Activated T-helper 1 cell treated with anti-CD3 and anti-CD28 coated beads, Interleukin-12 subunit alpha, Interleukin-12 subunit beta, Interleukin-2, Interleukin-4 antibody, amounts not matched to agents 30 ng/mL and 10 ng/mL and 1 ng/mL, durations not matched to agents 14 hours and 24 hours and 36 hours (primary cell): ENCODE measurements at regions of chr14 and their contacts with region 1.

Region 1: DNA sequence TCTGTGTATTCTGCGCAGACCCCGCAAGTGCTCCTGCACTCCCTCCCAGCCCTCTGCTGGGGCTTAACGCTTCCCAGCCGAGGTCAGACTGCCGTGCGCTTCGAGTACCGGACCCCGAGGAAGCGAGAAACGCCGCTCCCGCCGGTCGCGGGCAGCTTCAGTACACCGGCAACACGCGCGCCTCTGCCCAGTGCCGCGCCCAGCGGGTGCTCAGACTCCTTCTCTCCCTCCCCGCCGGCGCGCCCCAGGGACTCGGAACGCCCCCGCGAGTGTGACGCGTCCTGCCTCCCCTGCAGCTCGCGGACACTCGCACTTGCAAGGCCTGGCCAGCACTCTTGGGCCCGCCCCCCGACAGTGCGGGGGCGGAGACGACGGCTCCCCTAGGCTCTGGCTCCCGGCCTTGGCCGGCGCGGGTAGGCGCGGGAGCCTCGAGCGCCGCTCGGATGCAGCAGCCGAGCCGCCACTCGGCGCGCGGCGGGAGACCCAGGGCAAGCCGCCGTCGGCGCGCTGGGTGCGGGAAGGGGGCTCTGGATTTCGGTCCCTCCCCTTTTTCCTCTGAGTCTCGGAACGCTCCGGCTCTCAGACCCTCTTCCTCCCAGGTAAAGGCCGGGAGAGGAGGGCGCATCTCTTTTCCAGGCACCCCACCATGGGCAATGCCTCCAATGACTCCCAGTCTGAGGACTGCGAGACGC is at the start of gene PTGER2:
- DNase-seq: peak; percentile 85
- H3K4me3 Mint-ChIP-seq: peak within 1 kb of the TSS; percentile 98
- H3K27ac Mint-ChIP-seq: peak within 1 kb of the TSS; percentile 99
- H3K4me1 Mint-ChIP-seq: peaks cover 71% of the 10 kb centered on the region
- H3K27me3 Mint-ChIP-seq: peaks cover 1% of the 10 kb centered on the region
- total RNA-seq, gene PTGER2: 67.4 and 67.9 TPM in 2 replicates

Region 2: GRCh38 chr14:52299692-52300278 is 14.3 kb before region 1 on chr14:
- intact Hi-C with region 1: loop called (anchors 1 kb)
- DNase-seq: no peak
- H3K4me3 Mint-ChIP-seq: no peak overlapping the region
- H3K27ac Mint-ChIP-seq: no peak overlapping the region
- H3K4me1 Mint-ChIP-seq: peaks cover 47% of the 10 kb centered on the region
- H3K27me3 Mint-ChIP-seq: peaks cover 3% of the 10 kb centered on the region

Region 3: GRCh38 chr14:52351233-52352060 is 37.4 kb after region 1 on chr14:
- intact Hi-C with region 1: loop called (anchors 1 kb)
- DNase-seq: peak; percentile 8
- H3K4me3 Mint-ChIP-seq: peak overlapping the region; percentile 75
- H3K27ac Mint-ChIP-seq: peak overlapping the region; percentile 96
- H3K4me1 Mint-ChIP-seq: peaks cover 73% of the 10 kb centered on the region
- H3K27me3 Mint-ChIP-seq: no peaks in the 10 kb centered on the region

Region 4: DNA sequence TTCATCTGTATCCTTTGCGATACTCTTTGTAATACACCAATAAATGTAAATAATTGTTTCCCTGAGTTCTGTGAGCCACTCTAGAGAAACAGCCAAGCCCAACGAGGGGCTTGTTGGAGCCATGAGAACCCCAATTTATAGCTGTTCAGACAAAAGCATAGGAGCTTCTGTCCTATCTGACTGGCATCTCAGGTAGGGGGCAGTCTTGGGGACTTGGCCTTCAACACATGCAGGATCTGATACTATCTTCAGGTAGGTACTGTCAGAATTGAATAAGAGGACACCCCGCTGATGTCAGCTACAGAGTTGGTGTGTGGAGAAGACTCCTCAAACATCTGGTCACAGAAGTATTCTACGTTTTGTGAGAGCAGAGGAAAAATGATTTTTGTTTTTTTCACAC is 213.0 kb after region 1 on chr14:
- intact Hi-C with region 1: loop called (anchors 5 kb)
- DNase-seq: no peak
- H3K4me3 Mint-ChIP-seq: no peak overlapping the region
- H3K27ac Mint-ChIP-seq: no peak overlapping the region
- H3K4me1 Mint-ChIP-seq: no peaks in the 10 kb centered on the region
- H3K27me3 Mint-ChIP-seq: no peaks in the 10 kb centered on the region

Region 5: DNA sequence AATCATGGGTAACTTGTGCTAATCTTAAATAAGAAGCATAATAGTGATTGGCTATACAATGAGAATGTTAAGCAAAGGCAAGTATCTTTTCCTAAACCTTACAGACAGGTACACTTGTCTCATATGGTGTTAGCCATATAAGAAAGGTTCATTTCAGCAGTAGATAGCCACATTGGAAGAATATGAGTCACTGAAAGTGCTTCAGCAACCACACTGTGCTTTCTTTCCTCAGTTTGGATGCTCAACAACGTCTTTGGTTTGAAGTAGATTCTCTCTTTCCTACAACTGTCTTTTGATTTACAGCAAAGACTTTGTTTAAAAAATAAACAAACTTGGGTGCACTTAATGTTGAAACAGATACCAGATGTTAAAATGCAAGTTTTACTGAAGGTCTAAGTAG is 830.2 kb after region 1 on chr14:
- intact Hi-C with region 1: loop called (anchors 10 kb)
- DNase-seq: no peak
- H3K4me3 Mint-ChIP-seq: peak overlapping the region; percentile 29
- H3K27ac Mint-ChIP-seq: peak overlapping the region; percentile 76
- H3K4me1 Mint-ChIP-seq: peaks cover 79% of the 10 kb centered on the region
- H3K27me3 Mint-ChIP-seq: no peaks in the 10 kb centered on the region